GM12878 (cell line): ENCODE measurements at regions of chr18 and their contacts with region 1.

Region 1: GRCh38 chr18:63155169-63155852 is 164.3 kb downstream of the BCL2 start:
- DNase-seq: peak; percentile 88
- ATAC-seq: peak; percentile 46
- H3K4me3 ChIP-seq: peak overlapping the region; percentile 76; the same call in 1 of the 2 replicates
- H3K27ac ChIP-seq: peak overlapping the region; percentile 100
- H3K4me1 ChIP-seq: peaks cover 84% of the 10 kb centered on the region
- H3K27me3 ChIP-seq: no peaks in the 10 kb centered on the region
- CTCF ChIP-seq: peak in 2 of 3 experiments; percentile 96 to 98; a peak in 4 of 6 replicates
- EP300 ChIP-seq: peak; percentile 72 to 79; a peak in 3 of 4 replicates
- POLR2A ChIP-seq: peak; percentile 54; the same call in 1 of the 2 replicates
- RAD21 ChIP-seq: peak; percentile 78

Region 2: DNA sequence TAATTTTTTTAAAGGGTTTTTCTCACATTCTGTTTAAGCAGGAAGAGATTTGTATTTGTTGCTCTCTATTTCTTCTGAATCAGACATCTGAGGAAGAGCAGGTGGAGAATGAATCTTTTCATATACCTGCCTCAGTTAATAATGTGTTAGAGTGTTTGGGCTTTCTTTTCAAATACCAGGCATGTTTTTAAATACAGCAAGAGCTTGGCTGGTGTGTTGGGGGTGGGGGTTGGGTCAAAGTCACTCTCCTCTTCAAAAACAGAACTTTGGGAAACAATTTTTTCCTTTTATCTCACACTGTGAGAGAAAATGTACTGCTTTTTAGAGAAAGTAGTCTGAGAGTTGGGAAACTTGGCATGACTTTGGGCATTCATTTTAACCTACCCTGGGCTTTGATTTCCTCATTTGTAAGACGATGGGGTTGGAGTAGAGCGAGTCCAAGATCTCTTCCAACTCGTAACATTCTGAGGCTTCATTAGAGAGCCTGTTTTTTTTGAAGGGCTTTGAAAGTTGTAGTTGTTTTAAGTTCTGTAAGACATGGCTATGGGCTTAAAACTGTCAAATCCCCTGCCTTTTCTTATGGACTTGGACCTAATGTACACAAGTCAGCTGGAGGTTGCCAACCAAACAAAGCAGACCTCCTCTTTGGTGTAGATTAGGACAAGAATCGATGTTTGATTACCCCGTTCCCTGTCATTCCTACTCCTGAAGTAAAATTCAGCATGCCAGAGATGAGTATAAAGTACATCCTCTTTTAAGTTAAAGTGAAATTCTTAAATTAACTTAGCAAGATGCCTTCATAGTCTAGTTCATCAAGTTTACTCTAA is 431.6 kb before region 1 on chr18:
- CTCF ChIA-PET with region 1: no interaction called
- POLR2A ChIA-PET with region 1: no interaction called
- RAD21 ChIA-PET with region 1: no interaction called
- SMC1A ChIA-PET with region 1: no interaction called
- in situ Hi-C with region 1: no loop called
- intact Hi-C with region 1: no loop called
- DNase-seq: no peak
- ATAC-seq: no peak; the same call in 2 of the 3 replicates
- H3K4me3 ChIP-seq: no peak overlapping the region
- H3K27ac ChIP-seq: no peak overlapping the region
- H3K4me1 ChIP-seq: no peaks in the 10 kb centered on the region
- H3K27me3 ChIP-seq: no peaks in the 10 kb centered on the region
- CTCF ChIP-seq: no peak
- EP300 ChIP-seq: no peak
- POLR2A ChIP-seq: no peak
- RAD21 ChIP-seq: no peak

Region 3: GRCh38 chr18:62784966-62785413 is 370.3 kb before region 1 on chr18:
- CTCF ChIA-PET with region 1: no interaction called
- POLR2A ChIA-PET with region 1: no interaction called
- RAD21 ChIA-PET with region 1: no interaction called
- SMC1A ChIA-PET with region 1: no interaction called
- in situ Hi-C with region 1: no loop called
- intact Hi-C with region 1: no loop called
- DNase-seq: no peak
- ATAC-seq: peak; percentile 81
- H3K4me3 ChIP-seq: no peak overlapping the region
- H3K27ac ChIP-seq: peak overlapping the region; percentile 22; the same call in 1 of the 2 replicates
- H3K4me1 ChIP-seq: 0 out of 2 replicates have a peak, but pooled peaks cover 5% of the 10 kb centered on the region
- H3K27me3 ChIP-seq: no peaks in the 10 kb centered on the region
- CTCF ChIP-seq: no peak
- EP300 ChIP-seq: peak in 1 of 2 experiments; percentile 1; a peak in 2 of 4 replicates
- POLR2A ChIP-seq: no peak
- RAD21 ChIP-seq: no peak

Region 4: GRCh38 chr18:63025251-63026090 is 129.8 kb before region 1 on chr18:
- CTCF ChIA-PET with region 1: interaction called, 13 read pairs
- POLR2A ChIA-PET with region 1: no interaction called
- RAD21 ChIA-PET with region 1: interaction called, 3 read pairs
- SMC1A ChIA-PET with region 1: interaction called, 5 read pairs
- in situ Hi-C with region 1: no loop called
- intact Hi-C with region 1: no loop called
- DNase-seq: no peak
- ATAC-seq: peak; percentile 59; the same call in 2 of the 3 replicates
- H3K4me3 ChIP-seq: no peak overlapping the region
- H3K27ac ChIP-seq: no peak overlapping the region
- H3K4me1 ChIP-seq: no peaks in the 10 kb centered on the region
- H3K27me3 ChIP-seq: no peaks in the 10 kb centered on the region
- CTCF ChIP-seq: peak; percentile 36 to 59 (median 40); a peak in 4 of 6 replicates
- EP300 ChIP-seq: no peak
- POLR2A ChIP-seq: no peak
- RAD21 ChIP-seq: peak; percentile 72

Region 5: GRCh38 chr18:63074981-63075404 is 80.3 kb before region 1 on chr18:
- CTCF ChIA-PET with region 1: interaction called, 4 read pairs
- POLR2A ChIA-PET with region 1: interaction called, 3 read pairs
- RAD21 ChIA-PET with region 1: interaction called, 3 read pairs
- SMC1A ChIA-PET with region 1: interaction called, 4 read pairs
- in situ Hi-C with region 1: no loop called
- intact Hi-C with region 1: loop called (anchors 2 kb)
- DNase-seq: no peak
- ATAC-seq: peak; percentile 40
- H3K4me3 ChIP-seq: peak overlapping the region; percentile 45; the same call in 1 of the 2 replicates
- H3K27ac ChIP-seq: peak overlapping the region; percentile 60
- H3K4me1 ChIP-seq: peaks cover 17% of the 10 kb centered on the region
- H3K27me3 ChIP-seq: no peaks in the 10 kb centered on the region
- CTCF ChIP-seq: no peak
- EP300 ChIP-seq: no peak
- POLR2A ChIP-seq: peak; percentile 76
- RAD21 ChIP-seq: no peak

Region 6: GRCh38 chr18:63131106-63131958 is 24.0 kb before region 1 on chr18:
- CTCF ChIA-PET with region 1: interaction called, 416 read pairs
- POLR2A ChIA-PET with region 1: interaction called, 278 read pairs
- RAD21 ChIA-PET with region 1: interaction called, 463 read pairs
- SMC1A ChIA-PET with region 1: interaction called, 453 read pairs
- in situ Hi-C with region 1: no loop called
- intact Hi-C with region 1: loop called (anchors 1 kb)
- DNase-seq: no peak
- ATAC-seq: peak; percentile 84
- H3K4me3 ChIP-seq: no peak overlapping the region
- H3K27ac ChIP-seq: peak overlapping the region; percentile 49
- H3K4me1 ChIP-seq: peaks cover 24% of the 10 kb centered on the region
- H3K27me3 ChIP-seq: no peaks in the 10 kb centered on the region
- CTCF ChIP-seq: peak; percentile 52 to 65 (median 59)
- EP300 ChIP-seq: no peak
- POLR2A ChIP-seq: no peak
- RAD21 ChIP-seq: peak; percentile 76

Region 7: DNA sequence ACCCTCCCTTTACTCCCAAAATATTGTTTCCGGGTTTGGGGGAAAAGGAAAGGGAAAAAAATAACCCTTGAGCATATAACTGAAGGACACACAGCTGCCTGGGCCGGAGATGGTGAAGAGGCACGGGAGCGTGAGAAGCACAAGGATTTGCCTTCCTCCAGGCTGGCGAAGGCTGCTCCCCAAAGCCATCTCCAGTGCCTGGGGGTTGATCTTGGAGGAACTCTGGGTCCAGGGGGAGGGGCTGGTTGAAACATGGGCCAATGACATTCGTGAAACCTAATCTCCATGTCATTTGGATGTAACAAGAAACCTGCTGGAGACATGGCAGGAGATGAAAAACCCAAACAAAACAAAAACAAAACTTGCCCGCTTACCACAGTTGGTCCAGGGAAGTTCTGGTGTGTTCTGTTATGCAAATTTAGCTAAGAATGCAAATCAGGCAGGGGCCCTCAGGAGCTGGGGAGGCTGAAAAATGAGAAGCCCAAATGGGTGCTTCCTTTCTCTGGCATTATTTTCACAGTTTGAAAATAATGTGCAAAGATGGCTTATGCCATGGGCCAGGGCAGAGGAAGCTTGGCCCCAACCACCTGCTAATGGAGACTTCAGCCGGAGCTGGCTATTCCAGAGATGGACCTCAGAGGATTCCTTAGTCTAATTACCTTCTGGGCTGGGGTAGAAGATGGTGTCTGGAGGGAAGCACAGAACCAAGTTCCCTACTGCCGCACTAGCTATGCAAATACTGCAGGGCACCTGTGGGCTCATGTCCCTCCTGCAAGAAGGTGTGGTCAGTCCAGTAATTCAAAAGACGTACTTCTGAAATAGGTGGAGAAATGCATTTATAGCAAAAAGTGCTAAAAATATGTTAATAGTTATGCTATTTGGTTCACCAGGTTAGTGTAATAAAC is 16.6 kb before region 1 on chr18:
- CTCF ChIA-PET with region 1: interaction called, 416 read pairs
- POLR2A ChIA-PET with region 1: interaction called, 278 read pairs
- RAD21 ChIA-PET with region 1: interaction called, 463 read pairs
- SMC1A ChIA-PET with region 1: interaction called, 453 read pairs
- in situ Hi-C with region 1: no loop called
- intact Hi-C with region 1: loop called (anchors 1 kb)
- DNase-seq: peak; percentile 94
- ATAC-seq: peak; percentile 58
- H3K4me3 ChIP-seq: peak overlapping the region; percentile 65
- H3K27ac ChIP-seq: peak overlapping the region; percentile 96
- H3K4me1 ChIP-seq: peaks cover 72% of the 10 kb centered on the region
- H3K27me3 ChIP-seq: no peaks in the 10 kb centered on the region
- CTCF ChIP-seq: no peak
- EP300 ChIP-seq: peak in 1 of 2 experiments; percentile 69; a peak in 1 of 4 replicates
- POLR2A ChIP-seq: peak; percentile 74
- RAD21 ChIP-seq: no peak

Region 8: DNA sequence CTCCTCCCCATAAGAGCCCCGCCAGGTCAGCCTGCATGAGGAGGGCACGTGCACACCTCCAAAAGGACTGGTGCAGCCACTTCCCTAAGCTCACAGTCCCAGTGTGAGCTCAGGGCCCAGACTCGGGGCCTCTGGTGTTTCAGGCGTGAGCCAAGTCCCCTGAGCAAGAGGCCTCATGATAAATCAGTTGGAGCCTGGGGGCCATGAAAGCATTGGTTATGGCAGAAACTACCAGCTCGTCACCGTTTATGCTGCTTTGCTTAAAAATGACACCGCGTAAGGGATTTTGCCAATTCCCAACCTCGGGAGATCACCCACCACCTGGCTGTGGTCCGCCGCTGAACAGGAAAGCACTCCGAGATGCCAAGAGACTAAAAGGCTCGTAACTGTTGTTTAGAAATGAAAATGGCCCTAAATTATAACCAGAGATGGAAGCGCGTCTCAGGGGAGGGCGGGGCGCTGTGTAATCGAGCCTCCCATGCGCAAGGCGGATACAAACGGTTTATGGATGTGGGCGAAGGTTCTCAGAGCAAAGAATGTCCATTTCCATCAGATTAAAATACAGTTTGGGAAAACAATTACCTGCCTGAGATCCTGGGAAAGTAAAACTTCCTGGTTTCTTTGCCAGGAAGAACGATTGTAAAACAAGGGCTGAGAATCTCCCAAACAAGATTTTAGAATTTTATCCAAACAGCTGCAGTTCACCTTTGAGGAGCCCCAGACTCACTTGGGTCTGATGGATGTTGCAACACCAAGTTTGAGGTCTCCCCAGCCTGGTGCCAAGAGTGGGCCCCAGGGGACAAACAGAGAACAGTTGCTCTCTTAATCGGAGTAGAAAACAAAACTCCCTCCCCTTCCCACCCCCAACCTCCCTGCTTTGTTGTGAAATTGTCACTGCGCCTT is 22.9 kb after region 1 on chr18:
- CTCF ChIA-PET with region 1: interaction called, 3 read pairs
- POLR2A ChIA-PET with region 1: interaction called, 7 read pairs
- RAD21 ChIA-PET with region 1: interaction called, 4 read pairs
- SMC1A ChIA-PET with region 1: interaction called, 50 read pairs
- in situ Hi-C with region 1: no loop called
- intact Hi-C with region 1: no loop called
- DNase-seq: no peak
- ATAC-seq: peak; percentile 16; the same call in 2 of the 3 replicates
- H3K4me3 ChIP-seq: no peak overlapping the region
- H3K27ac ChIP-seq: peak overlapping the region; percentile 64
- H3K4me1 ChIP-seq: peaks cover 81% of the 10 kb centered on the region
- H3K27me3 ChIP-seq: no peaks in the 10 kb centered on the region
- CTCF ChIP-seq: no peak
- EP300 ChIP-seq: no peak; a peak in 1 of 4 replicates
- POLR2A ChIP-seq: no peak
- RAD21 ChIP-seq: 0 out of 2 replicates have a peak, but pooled peaks have one; percentile 12

Region 9: DNA sequence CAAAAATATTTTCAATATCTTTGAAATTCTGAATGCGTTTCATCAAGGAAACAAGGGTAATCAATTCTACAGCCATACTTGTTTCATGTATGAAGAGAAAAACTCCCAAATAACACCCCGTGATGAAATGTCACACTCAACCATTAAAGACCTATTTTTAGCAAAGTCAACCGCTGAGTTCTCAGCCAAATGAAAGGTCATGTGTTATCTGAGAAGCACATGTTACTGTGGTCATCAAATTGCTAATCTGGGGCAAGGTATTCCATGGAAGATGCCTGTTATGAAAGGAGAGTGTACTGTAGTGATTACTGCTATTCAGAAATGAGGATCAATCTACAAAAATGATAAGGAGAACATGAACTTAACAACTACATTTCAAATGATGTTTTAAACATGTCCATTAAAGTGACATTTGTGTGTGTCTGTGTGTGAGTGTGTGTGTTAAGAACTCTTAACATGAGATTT is 37.6 kb after region 1 on chr18:
- CTCF ChIA-PET with region 1: interaction called, 3 read pairs
- POLR2A ChIA-PET with region 1: interaction called, 3 read pairs
- RAD21 ChIA-PET with region 1: interaction called, 29 read pairs
- SMC1A ChIA-PET with region 1: interaction called, 39 read pairs
- in situ Hi-C with region 1: no loop called
- intact Hi-C with region 1: loop called (anchors 5 kb)
- DNase-seq: peak; percentile 72
- ATAC-seq: peak; percentile 75
- H3K4me3 ChIP-seq: no peak overlapping the region
- H3K27ac ChIP-seq: peak overlapping the region; percentile 51
- H3K4me1 ChIP-seq: peaks cover 27% of the 10 kb centered on the region
- H3K27me3 ChIP-seq: no peaks in the 10 kb centered on the region
- CTCF ChIP-seq: no peak
- EP300 ChIP-seq: peak; percentile 85 to 86
- POLR2A ChIP-seq: no peak
- RAD21 ChIP-seq: no peak